T-cell (primary cell): ENCODE measurements at regions of chr2 and their contacts with region 1.

Region 1: GRCh38 chr2:230077851-230078547 is 9.3 kb upstream of the SLC16A14 start:
- DNase-seq: no peak
- ATAC-seq: no peak
- H3K4me3 ChIP-seq: no peak overlapping the region
- H3K4me3 Mint-ChIP-seq: no peak overlapping the region
- H3K27ac ChIP-seq: no peak overlapping the region
- H3K27ac Mint-ChIP-seq: no peak overlapping the region
- H3K4me1 ChIP-seq: no peaks in the 10 kb centered on the region
- H3K4me1 Mint-ChIP-seq: no peaks in the 10 kb centered on the region
- H3K27me3 ChIP-seq: no peaks in the 10 kb centered on the region
- H3K27me3 Mint-ChIP-seq: peaks cover 0 to 3% of the 10 kb centered on the region in 2 donors

Region 2: DNA sequence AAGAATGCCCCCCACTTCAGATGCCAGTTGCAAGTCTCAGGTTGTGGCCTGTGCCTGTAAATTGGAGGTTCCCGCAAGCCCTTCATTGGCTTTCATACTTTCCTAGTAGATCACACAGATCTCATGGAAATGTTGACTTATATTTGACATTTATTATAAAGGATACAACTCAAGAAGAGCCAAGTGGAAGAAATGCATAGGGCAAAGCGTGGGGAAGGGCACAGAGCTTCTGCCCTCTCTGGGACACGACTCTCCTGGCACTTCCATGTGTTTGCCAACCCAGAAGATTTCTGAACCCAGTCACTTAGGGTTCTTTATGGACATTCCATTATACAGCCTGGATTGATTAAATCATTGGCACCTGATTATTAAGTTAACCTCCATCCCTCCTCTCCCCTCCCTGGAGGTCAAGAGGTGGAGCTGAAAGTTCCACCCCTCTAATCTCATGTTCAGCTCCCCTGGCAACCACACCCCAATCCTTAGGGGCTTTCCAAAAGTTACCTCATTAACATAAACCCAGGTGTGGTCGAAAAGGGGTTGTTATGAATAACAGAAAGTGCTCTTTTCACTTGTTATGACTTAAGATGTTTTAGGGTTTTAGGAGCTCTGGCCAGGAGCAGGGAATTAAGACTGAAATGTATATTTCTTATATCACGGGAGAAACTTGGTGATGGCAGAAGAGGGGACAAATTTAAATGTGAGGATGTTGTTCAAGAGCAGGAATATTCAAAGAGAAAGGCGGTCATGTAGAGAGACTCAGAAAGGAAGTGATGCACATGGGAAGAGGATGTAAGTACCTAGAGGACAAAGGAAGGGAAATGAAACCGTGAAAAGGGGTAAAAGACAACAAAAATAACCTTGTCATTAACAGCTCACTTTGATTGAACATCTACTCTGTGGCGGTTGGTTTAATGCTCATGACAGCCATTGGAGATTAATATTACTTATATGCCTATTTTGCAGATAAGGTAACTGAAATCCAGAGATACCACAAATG is 369.8 kb after region 1 on chr2:
- CTCF ChIA-PET with region 1: no interaction called
- POLR2A ChIA-PET with region 1: no interaction called
- DNase-seq: peak in 12 of 35 experiments; percentile 7 to 61 (median 16)
- ATAC-seq: peak; percentile 50 to 89 (median 72)
- H3K4me3 ChIP-seq: no peak overlapping the region
- H3K4me3 Mint-ChIP-seq: peak overlapping the region; percentile 16 to 31 (median 22)
- H3K27ac ChIP-seq: peak overlapping the region; percentile 66
- H3K27ac Mint-ChIP-seq: peak overlapping the region; percentile 88 to 92
- H3K4me1 ChIP-seq: peaks cover 9 to 23% of the 10 kb centered on the region in 2 experiments
- H3K4me1 Mint-ChIP-seq: peaks cover 53 to 76% (median 75%) of the 10 kb centered on the region in 3 donors
- H3K27me3 ChIP-seq: no peaks in the 10 kb centered on the region
- H3K27me3 Mint-ChIP-seq: no peaks in the 10 kb centered on the region

Region 3: DNA sequence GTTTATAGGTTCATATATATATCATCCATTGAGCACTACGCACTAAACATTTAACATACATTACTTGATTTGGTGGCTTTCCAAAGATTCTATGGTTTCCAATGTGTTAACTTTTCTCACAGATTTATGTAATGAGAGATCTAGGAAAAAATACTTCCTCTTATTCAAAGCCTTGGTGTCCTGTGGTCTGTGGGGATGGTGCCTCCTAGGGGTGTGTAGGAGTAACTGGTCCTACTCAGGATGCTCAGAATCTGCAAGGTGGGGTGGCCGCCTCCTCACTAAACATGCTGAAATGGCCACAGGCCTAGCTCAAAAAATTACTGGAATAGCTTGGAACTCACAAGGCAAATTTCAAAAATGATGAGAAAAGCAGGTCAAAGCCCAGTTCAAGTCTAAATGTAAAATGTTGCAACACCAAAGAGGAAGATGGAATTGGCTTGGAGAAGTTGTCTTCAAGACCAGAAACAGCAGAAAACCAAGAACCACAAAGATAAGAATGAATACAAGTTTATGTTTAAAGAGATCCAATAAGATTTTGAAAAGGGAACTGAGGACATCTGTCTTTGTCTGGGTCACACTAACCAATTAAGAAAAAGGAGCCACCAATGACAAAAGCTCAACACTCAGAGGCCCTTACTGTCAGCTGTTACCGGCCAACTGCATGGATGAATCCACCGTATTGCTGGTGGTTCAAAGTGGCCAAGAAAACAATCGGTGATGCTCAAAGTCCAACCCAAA is 835.6 kb after region 1 on chr2:
- CTCF ChIA-PET with region 1: interaction called in 1 of 2 experiments, 13 read pairs
- POLR2A ChIA-PET with region 1: no interaction called
- DNase-seq: peak in 6 of 35 experiments; percentile 21 to 60 (median 27)
- ATAC-seq: peak in 3 of 4 experiments; percentile 50 to 63 (median 51)
- H3K4me3 ChIP-seq: no peak overlapping the region
- H3K4me3 Mint-ChIP-seq: no peak overlapping the region
- H3K27ac ChIP-seq: no peak overlapping the region
- H3K27ac Mint-ChIP-seq: no peak overlapping the region
- H3K4me1 ChIP-seq: peaks cover 0 to 11% of the 10 kb centered on the region in 2 experiments
- H3K4me1 Mint-ChIP-seq: peaks cover 10 to 29% (median 23%) of the 10 kb centered on the region in 3 donors
- H3K27me3 ChIP-seq: peaks cover 0 to 19% of the 10 kb centered on the region in 2 experiments
- H3K27me3 Mint-ChIP-seq: no peaks in the 10 kb centered on the region